Psoas muscle (tissue), 8 donors: ENCODE measurements at regions of chr10 and their contacts with region 1.

Region 1: DNA sequence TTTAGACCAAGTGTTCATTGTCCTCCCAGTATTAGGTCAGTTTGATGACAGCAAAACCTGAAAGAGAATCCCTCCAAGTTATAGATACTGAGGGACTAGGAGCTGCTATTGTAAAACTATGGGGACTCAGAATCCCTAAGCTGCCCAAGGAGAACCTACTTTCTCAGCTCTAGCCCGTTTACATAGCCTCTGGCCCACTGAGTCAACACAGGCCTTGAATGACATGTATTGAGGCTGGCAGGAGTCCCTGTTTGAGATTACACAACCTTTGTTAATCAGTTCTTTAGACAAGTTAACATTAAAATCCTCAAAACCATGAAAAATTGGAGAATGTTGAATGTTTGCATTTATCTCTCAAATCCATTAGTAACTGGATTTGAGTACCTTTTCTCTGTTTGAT is 1079.0 kb downstream of the KCNMA1 start:
- DNase-seq: no peak
- ATAC-seq: no peak
- H3K4me3 ChIP-seq: no peak overlapping the region
- H3K27ac ChIP-seq: no peak overlapping the region
- H3K4me1 ChIP-seq: no peaks in the 10 kb centered on the region
- H3K27me3 ChIP-seq: no peaks in the 10 kb centered on the region
- CTCF ChIP-seq: no peak

Region 2: DNA sequence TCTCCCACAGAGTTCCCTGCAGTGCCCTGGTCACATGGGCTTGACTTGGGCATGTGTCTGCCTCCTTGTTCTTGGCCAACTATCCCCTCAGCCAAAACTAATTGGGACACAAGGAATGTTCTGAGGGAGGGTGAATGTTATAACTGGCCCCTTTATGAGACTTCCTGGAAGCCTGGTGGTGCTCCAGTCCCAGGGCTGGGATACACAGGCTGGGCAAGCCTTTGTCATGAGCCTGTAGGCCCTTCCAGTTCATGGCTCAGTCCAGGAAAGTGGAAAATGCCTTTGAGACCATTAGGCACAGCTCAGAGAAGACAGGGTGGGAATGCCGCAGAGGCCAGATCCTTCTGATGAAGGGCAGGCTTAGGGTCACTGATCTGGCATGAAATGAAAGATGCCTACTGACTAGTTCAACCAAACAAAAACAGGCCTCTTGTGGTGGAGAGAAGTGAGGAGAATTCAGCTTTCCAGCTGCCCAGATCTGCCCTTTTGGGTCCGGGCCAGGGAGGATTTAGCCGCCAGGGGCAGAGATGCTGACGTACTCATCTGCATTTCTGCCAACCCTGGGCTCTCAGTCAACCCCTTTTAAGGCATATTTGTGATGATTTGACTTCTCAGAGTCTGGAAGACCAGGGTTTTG is 117.5 kb after region 1 on chr10:
- intact Hi-C with region 1: no loop called
- DNase-seq: peak; percentile 54 to 64
- ATAC-seq: peak; percentile 27 to 73 (median 50)
- H3K4me3 ChIP-seq: no peak overlapping the region
- H3K27ac ChIP-seq: peak overlapping the region; percentile 21
- H3K4me1 ChIP-seq: no peaks in the 10 kb centered on the region
- H3K27me3 ChIP-seq: no peaks in the 10 kb centered on the region
- CTCF ChIP-seq: no peak

Region 3: DNA sequence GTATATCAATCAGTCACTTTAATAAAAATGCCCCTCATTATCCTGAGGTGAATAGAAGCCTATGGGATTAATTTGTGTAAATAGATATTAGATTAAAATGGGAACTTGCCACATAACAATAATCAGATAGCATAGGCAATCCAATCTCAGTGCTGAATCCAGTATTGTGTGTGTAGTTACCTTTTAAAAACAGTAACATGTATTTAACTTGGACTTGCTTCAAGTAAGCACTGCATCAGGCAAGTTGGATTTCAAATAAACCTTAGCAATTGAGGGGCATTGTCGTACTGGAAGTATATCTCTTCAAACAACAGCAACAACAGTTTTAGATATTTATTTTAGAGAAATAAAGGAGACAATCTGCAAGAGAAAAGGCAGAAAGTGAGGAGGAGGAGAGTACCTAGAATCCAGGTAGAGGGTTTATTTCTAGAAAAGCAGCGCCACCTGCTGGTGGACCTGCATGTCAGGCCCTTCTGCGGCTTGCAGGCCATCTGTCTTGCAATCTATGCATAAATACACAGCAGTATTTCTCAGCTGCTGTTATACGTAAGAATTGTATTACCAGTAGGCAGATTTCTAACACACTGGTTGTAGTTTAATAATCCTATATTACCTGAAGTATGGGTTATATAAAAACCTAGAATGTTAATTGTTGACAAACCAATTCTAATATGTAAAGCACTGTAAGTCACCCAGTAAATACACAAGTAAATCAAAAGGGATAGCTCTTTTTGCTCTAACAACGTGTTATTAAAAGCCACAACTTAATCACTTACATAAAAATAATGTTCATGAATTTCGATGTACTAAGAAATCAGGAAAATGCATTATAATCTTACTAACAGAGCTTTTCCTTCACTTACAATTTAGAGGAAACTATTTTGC is 426.2 kb after region 1 on chr10:
- intact Hi-C with region 1: loop called in 1 of 2 experiments (anchors 5 kb)
- DNase-seq: peak; percentile 56 to 71
- ATAC-seq: peak in 3 of 4 donors; percentile 62 to 93 (median 85)
- H3K4me3 ChIP-seq: no peak overlapping the region
- H3K27ac ChIP-seq: no peak overlapping the region
- H3K4me1 ChIP-seq: no peaks in the 10 kb centered on the region
- H3K27me3 ChIP-seq: no peaks in the 10 kb centered on the region
- CTCF ChIP-seq: peak; percentile 90

Region 4: GRCh38 chr10:77004917-77005564 is 446.5 kb after region 1 on chr10:
- intact Hi-C with region 1: loop called in 1 of 2 experiments (anchors 10 kb)
- DNase-seq: no peak
- ATAC-seq: peak; percentile 52 to 81 (median 70)
- H3K4me3 ChIP-seq: no peak overlapping the region
- H3K27ac ChIP-seq: no peak overlapping the region
- H3K4me1 ChIP-seq: no peaks in the 10 kb centered on the region
- H3K27me3 ChIP-seq: no peaks in the 10 kb centered on the region
- CTCF ChIP-seq: peak; percentile 77